PC-3 (cell line): ENCODE measurements at regions of chr1 and their contacts with region 1.

Region 1: DNA sequence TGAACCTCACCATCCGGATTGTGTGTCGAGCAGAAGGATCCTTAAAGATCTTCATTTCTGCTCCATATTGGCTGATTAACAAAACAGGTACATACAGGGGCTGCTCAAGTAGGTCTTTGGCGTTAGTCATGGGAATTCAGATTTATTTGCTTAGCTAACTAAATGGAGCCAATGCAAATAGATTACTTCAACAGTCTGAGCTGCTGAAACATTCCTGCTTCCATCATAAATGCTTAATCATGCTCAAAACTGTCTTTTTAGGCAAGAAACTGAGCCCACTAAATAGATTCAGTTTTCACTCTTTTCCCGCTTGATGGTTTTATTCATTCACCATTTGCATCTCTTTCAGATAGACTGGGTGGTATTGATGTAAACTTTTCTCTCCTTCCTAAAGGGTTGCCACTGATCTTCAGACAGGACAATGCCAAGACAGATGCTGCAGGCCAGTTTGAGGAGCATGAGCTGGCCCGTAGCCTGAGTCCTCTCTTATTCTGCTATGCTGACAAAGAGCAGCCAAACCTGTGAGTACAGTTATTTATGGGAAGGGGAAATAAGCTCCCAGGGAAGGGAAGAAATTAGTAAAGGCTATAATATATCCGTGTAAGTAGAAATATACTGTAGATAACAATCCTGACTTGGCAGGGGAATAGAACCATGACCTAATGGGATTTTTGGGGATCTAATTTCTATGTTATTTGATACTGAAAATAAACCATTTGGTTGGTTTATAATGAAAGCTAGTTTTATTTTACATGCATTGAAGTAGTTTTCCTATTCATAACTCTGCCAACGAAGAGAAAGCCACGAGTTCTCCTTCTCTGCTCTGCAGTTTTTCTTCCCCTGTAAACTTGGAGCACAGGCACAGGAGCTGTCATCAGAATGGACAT is 126.4 kb downstream of the VPS13D start:
- DNase-seq: peak; percentile 88
- ATAC-seq: peak; percentile 96
- H3K4me3 ChIP-seq: peak overlapping the region; percentile 30; the same call in 1 of the 2 replicates
- H3K27ac ChIP-seq: peak overlapping the region; percentile 90
- H3K4me1 ChIP-seq: peaks cover 26% of the 10 kb centered on the region
- H3K27me3 ChIP-seq: no peaks in the 10 kb centered on the region
- CTCF ChIP-seq: no peak

Region 2: DNA sequence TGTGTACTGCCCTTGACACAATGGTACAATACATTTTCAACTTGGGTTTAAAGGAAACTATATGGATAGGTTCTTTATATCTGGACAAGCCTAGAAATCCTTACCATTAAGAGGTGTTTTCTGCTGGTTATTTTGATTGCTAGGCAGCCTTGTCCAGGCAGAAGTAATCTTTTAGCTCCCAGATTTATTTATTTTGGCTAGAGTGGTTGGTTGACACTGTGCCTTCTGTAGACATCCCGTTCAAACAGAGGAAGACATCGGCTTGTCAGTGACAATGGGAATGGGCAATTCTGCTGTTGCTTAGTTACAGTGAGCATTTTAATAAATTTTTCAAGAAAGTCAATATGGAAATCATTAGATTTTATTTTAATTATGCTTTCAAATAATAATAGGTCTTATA is 12.4 kb after region 1 on chr1:
- CTCF ChIA-PET with region 1: no interaction called
- POLR2A ChIA-PET with region 1: no interaction called
- intact Hi-C with region 1: loop called (anchors 1 kb)
- DNase-seq: peak; percentile 7
- ATAC-seq: peak; percentile 44
- H3K4me3 ChIP-seq: no peak overlapping the region
- H3K27ac ChIP-seq: peak overlapping the region; percentile 59
- H3K4me1 ChIP-seq: peaks cover 17% of the 10 kb centered on the region
- H3K27me3 ChIP-seq: no peaks in the 10 kb centered on the region
- CTCF ChIP-seq: no peak

Region 3: GRCh38 chr1:12380326-12381249 is 24.3 kb after region 1 on chr1:
- CTCF ChIA-PET with region 1: no interaction called
- POLR2A ChIA-PET with region 1: interaction called, 4 read pairs
- intact Hi-C with region 1: loop called (anchors 1 kb)
- DNase-seq: peak; percentile 61
- ATAC-seq: peak; percentile 27
- H3K4me3 ChIP-seq: peak overlapping the region; percentile 39
- H3K27ac ChIP-seq: peak overlapping the region; percentile 99
- H3K4me1 ChIP-seq: peaks cover 54% of the 10 kb centered on the region
- H3K27me3 ChIP-seq: no peaks in the 10 kb centered on the region
- CTCF ChIP-seq: no peak

Region 4: DNA sequence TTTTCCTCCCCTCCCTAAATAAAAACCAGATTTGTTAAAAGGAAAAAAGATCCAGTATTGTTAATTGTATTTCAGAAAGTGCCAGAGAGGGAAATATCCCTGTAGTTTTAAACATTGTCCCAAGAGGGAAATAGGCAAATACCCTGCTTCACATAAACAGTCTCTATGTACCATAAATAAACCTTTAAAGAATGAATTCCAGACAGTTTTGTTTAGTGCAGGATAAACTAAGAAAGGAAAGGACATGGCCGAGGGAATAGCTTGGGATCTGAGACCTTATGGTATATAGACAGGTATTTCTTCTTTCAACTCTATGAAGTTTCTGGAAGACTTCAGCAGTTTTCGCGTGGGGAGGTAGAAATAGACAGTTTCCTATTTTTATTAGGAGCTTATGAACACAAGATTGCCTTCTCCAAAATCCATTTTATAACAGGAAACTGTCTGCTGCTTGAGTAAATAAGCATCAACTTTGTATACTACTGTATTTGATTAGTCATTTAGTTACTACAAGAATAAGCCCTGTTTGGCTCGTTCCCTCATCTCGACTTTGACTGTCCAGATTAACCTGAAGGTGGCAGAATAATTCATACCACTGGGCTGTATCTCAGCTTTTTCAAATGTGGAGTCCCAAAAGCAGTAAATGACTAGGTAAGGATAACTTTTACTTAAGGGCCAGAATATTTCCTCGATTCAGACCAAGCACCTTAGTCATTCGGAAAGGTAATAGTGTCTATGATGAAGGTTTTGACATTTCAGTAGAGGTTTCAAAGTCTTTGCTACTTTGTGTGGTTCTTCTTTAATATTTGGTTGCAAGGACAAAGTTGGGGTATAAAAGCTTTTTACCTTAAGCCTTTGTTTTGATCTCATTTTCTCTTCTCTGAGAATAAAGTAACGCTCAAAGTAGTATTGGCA is 51.1 kb after region 1 on chr1:
- CTCF ChIA-PET with region 1: interaction called, 4 read pairs
- POLR2A ChIA-PET with region 1: no interaction called
- intact Hi-C with region 1: loop called (anchors 2 kb)
- DNase-seq: peak; percentile 90
- ATAC-seq: peak; percentile 97
- H3K4me3 ChIP-seq: no peak overlapping the region
- H3K27ac ChIP-seq: peak overlapping the region; percentile 60
- H3K4me1 ChIP-seq: peaks cover 31% of the 10 kb centered on the region
- H3K27me3 ChIP-seq: no peaks in the 10 kb centered on the region
- CTCF ChIP-seq: peak; percentile 78

Region 5: GRCh38 chr1:12434174-12434573 is 77.9 kb after region 1 on chr1:
- CTCF ChIA-PET with region 1: no interaction called
- POLR2A ChIA-PET with region 1: no interaction called
- intact Hi-C with region 1: loop called (anchors 5 kb)
- DNase-seq: peak; percentile 76
- ATAC-seq: peak; percentile 84
- H3K4me3 ChIP-seq: no peak overlapping the region
- H3K27ac ChIP-seq: peak overlapping the region; percentile 39
- H3K4me1 ChIP-seq: peaks cover 59% of the 10 kb centered on the region
- H3K27me3 ChIP-seq: no peaks in the 10 kb centered on the region
- CTCF ChIP-seq: no peak

Region 6: DNA sequence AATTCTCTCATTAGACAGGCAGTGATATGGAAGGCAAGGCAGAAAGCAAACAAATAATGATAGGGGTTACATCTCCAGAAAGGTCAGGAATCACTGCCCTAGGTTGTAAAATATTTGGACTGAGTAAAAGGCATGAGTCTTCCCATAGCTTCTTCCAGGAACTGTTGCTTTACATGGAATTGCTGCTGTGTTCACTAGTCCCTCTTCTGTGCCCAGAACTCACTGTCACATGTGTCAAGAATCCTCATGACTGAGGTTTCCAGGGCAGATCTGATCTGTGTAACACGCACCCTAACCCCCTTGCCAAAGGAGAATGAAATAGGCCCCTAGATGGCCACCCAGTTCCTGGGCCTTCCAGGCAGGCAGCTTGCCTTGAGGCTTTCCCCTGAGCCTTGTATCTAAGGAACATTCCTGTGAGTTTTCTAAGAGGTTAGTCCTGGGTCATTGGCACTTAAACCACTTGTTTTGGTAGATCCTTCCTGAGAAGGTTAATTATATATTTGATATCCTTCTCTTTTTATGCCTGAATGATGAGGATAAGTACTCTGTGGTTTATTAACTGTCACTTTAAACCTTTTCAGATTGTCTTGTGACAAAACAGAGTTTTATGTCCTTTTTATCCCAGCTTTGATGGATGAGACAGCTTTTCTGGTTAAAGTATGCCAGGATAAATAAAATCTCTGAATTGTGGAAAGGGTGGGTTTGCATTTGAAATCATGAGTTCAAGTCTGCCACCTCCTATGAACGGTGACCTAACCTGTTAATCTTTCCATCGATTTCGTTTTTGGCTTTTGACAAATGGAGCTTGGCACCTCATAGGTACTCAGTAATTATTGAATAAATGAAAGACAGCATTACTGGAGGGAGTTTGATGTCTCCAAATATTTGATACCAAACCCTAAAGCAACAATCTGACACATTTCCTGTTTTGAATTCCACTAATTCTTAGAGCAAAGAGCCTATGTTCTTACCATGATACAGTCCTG is 98.5 kb after region 1 on chr1:
- CTCF ChIA-PET with region 1: interaction called, 16 read pairs
- POLR2A ChIA-PET with region 1: no interaction called
- intact Hi-C with region 1: no loop called
- DNase-seq: peak; percentile 57
- ATAC-seq: peak; percentile 39
- H3K4me3 ChIP-seq: no peak overlapping the region
- H3K27ac ChIP-seq: no peak overlapping the region
- H3K4me1 ChIP-seq: peaks cover 50% of the 10 kb centered on the region
- H3K27me3 ChIP-seq: no peaks in the 10 kb centered on the region
- CTCF ChIP-seq: no peak